Prostate gland (tissue), 2 donors: ENCODE measurements at regions of chr12 and their contacts with region 1.

Region 1: DNA sequence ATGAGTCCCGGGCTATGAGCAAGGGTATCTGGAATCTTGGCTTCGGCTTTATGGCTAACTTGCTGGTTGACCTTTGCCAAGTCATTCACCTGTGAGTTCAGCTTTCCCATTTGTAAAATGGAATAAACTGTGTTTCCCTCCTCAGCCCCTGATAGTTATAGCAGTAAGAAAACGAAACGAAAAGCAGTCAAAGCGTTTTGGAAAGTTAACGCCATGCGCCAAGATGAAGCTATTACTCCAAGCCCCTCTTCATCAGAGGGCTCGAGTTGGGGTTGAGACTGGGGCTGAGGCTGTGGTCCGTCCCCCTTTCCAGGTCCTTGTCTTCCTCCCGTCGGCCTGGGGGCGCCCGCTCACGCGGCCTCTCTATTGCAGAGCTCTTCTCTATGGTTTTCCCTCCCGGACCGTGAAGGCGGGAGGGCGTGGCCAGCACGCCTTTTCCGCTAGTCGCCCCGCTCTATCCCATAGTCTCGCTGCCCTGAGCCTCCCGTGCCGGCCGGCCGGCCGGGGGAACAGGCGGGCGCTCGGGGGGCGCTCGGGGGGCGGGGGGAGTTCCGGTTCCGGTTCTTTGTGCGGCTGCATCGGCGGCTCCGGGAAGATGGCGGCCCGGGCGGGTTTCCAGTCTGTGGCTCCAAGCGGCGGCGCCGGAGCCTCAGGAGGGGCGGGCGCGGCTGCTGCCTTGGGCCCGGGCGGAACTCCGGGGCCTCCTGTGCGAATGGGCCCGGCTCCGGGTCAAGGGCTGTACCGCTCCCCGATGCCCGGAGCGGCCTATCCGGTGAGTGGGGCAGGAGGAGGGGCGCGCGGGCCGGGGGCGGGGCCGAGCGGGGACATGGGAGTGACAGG is at the start of gene SMARCD1:
- DNase-seq: peak; percentile 90
- H3K4me3 ChIP-seq: peak within 1 kb of the TSS; percentile 91 to 99
- H3K27ac ChIP-seq: peak within 1 kb of the TSS; percentile 95 to 97
- H3K4me1 ChIP-seq: no peaks in the 10 kb centered on the region
- H3K27me3 ChIP-seq: no peaks in the 10 kb centered on the region
- CTCF ChIP-seq: peak in 3 of 4 experiments; percentile 45 to 57 (median 53)
- POLR2A ChIP-seq: no peak
- total RNA-seq, gene SMARCD1: 72.9 to 90.1 TPM

Region 2: DNA sequence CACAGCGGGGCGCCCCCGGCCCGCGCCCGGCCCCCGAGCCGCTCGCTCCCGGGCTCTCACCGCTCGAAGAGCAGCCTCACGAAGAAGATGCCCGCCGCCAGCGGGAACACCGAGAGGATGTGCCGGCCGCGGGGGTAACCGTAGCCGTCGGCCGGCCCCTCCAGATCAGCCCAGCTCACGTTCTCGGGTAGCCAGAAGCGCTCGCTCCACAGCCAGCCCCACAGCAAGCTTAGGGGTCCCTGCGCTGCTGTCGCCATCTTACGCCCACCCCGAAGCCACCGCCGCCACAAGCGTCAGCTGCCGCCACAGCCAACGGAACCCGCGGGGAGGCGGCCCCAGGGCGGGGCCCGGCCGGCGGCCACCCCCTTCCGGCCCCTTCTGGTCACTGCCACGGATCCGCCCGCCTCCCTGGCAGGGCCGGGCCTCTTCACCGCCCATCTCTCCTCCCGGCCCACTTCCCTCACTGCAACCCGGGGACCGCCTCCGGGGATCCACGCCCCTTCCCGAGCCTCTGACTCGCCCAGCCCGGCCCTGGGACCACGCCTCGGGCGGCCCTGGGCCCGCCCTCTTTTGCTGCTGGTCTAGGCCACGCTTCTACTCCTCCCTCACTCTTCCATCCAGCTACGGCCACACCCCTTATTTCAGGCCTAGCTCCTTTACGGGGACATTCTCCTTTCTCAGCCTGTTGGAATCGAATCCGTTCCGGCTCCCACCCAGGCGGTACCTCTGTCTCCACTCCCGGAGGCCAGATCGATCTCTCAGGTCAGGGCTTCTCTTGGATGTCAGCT is 82.2 kb after region 1 on chr12 and contains the start of gene CERS5:
- intact Hi-C with region 1: loop called (anchors 5 kb)
- DNase-seq: peak; percentile 99
- H3K4me3 ChIP-seq: peak within 1 kb of the TSS; percentile 83 to 95
- H3K27ac ChIP-seq: peak within 1 kb of the TSS; percentile 85 to 88
- H3K4me1 ChIP-seq: no peaks in the 10 kb centered on the region
- H3K27me3 ChIP-seq: no peaks in the 10 kb centered on the region
- CTCF ChIP-seq: peak in 2 of 4 experiments; percentile 52 to 66
- POLR2A ChIP-seq: peak; percentile 76
- total RNA-seq, gene CERS5: 27.6 to 41.7 TPM